CD4-positive, alpha-beta T cell (primary cell): ENCODE measurements at regions of chr11 and their contacts with region 1.

Region 1: DNA sequence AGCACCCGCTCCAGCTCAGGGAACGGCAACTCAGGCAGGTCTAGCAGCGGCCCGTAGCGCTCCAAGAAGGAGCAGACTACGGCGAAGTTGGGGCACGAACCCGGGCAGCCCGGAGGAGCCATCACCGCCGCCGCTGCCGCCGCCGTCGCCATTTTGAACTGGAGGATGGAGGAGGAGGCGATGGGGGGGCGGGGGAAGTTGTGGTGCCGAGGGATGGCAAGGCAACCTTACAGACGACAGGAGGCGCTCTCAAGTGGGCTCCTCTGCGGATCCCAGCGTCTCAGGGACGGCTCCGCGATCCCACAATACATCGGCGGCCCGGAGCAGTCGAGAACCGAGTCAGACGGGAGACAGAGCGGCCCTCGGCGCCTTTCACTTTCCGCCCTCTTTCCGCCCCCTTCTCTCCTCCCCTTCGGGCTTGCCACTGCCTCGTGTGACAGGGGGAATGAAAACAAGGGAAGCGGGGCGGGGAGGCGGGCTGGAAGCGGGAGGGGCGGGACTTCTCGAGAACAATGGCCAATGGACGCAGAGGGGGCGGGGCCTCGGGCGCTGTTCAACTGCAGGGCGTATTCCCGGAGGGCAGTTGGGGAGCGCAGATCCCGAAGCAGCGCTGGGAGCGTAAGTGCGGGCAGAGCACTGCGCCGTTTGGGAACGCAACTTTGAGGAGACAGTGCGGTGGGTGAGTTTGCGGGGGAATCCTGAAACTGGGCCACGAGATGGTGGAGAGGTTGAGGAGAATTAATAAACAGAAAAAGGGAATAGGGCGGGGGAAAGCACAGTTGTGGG is at the starts of genes AAMDC and RSF1:
- DNase-seq: peak; percentile 92 to 99 (median 96)
- ATAC-seq: peak; percentile 80
- H3K4me3 ChIP-seq: peak within 1 kb of the TSS; percentile 84
- H3K4me3 Mint-ChIP-seq: peak within 1 kb of the TSS; percentile 98
- H3K27ac ChIP-seq: peak within 1 kb of the TSS; percentile 74 to 95
- H3K27ac Mint-ChIP-seq: peak within 1 kb of the TSS; percentile 92
- H3K4me1 ChIP-seq: peaks cover 29% of the 10 kb centered on the region
- H3K4me1 Mint-ChIP-seq: peaks cover 46% of the 10 kb centered on the region
- H3K27me3 ChIP-seq: no peaks in the 10 kb centered on the region
- H3K27me3 Mint-ChIP-seq: no peaks in the 10 kb centered on the region
- CTCF ChIP-seq: peak; percentile 69
- total RNA-seq, gene AAMDC: 1.5 to 2.1 TPM
- total RNA-seq, gene RSF1: 87.7 to 91.9 TPM

Region 2: GRCh38 chr11:77637345-77638165 is 183.2 kb before region 1 on chr11 and contains the start of gene CLNS1A:
- CTCF ChIA-PET with region 1: no interaction called
- POLR2A ChIA-PET with region 1: no interaction called
- intact Hi-C with region 1: loop called in 1 of 2 experiments (anchors 2 kb)
- DNase-seq: peak; percentile 61 to 89 (median 74)
- ATAC-seq: peak; percentile 99
- H3K4me3 ChIP-seq: peak within 1 kb of the TSS; percentile 92
- H3K4me3 Mint-ChIP-seq: peak within 1 kb of the TSS; percentile 98
- H3K27ac ChIP-seq: peak within 1 kb of the TSS; percentile 65 to 77
- H3K27ac Mint-ChIP-seq: peak within 1 kb of the TSS; percentile 85
- H3K4me1 ChIP-seq: peaks cover 31% of the 10 kb centered on the region
- H3K4me1 Mint-ChIP-seq: peaks cover 48% of the 10 kb centered on the region
- H3K27me3 ChIP-seq: peaks cover 0 to 2% of the 10 kb centered on the region in 2 experiments
- H3K27me3 Mint-ChIP-seq: no peaks in the 10 kb centered on the region
- CTCF ChIP-seq: no peak
- total RNA-seq, gene CLNS1A: 87.8 to 93.1 TPM

Region 3: GRCh38 chr11:77776455-77776854 is 44.3 kb before region 1 on chr11:
- CTCF ChIA-PET with region 1: no interaction called
- POLR2A ChIA-PET with region 1: no interaction called
- intact Hi-C with region 1: loop called (anchors 1 to 5 kb)
- DNase-seq: peak in 3 of 14 experiments; percentile 45 to 53 (median 49)
- ATAC-seq: no peak
- H3K4me3 ChIP-seq: no peak overlapping the region
- H3K4me3 Mint-ChIP-seq: no peak overlapping the region
- H3K27ac ChIP-seq: no peak overlapping the region
- H3K27ac Mint-ChIP-seq: no peak overlapping the region
- H3K4me1 ChIP-seq: peaks cover 4% of the 10 kb centered on the region
- H3K4me1 Mint-ChIP-seq: peaks cover 79% of the 10 kb centered on the region
- H3K27me3 ChIP-seq: no peaks in the 10 kb centered on the region
- H3K27me3 Mint-ChIP-seq: no peaks in the 10 kb centered on the region
- CTCF ChIP-seq: no peak

Region 4: GRCh38 chr11:77799338-77799737 is 21.4 kb before region 1 on chr11:
- CTCF ChIA-PET with region 1: no interaction called
- POLR2A ChIA-PET with region 1: no interaction called
- intact Hi-C with region 1: loop called in 1 of 2 experiments (anchors 2 kb)
- DNase-seq: no peak
- ATAC-seq: no peak
- H3K4me3 ChIP-seq: no peak overlapping the region
- H3K4me3 Mint-ChIP-seq: no peak overlapping the region
- H3K27ac ChIP-seq: no peak overlapping the region
- H3K27ac Mint-ChIP-seq: peak overlapping the region; percentile 6
- H3K4me1 ChIP-seq: peaks cover 19% of the 10 kb centered on the region
- H3K4me1 Mint-ChIP-seq: peaks cover 76% of the 10 kb centered on the region
- H3K27me3 ChIP-seq: no peaks in the 10 kb centered on the region
- H3K27me3 Mint-ChIP-seq: no peaks in the 10 kb centered on the region
- CTCF ChIP-seq: no peak

Region 5: DNA sequence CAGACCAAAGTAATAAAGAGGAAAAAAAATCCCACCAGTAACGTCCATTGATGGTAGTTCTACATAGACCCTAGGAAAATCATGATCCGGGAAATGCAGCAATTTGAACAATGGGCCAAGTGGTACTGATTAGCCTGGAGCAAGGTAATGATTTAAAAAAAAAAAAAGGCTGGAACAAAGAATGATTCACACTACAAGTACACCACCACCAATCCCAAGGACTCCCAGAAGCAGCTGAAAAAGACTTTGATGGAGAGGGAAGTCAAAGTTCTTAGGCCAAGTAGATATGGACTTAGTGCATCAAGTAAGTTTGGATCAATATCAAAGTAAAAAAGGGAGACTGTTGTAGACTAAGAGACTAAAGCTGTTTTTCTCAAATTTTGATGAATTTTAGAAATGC is 190.5 kb after region 1 on chr11:
- CTCF ChIA-PET with region 1: no interaction called
- POLR2A ChIA-PET with region 1: no interaction called
- intact Hi-C with region 1: no loop called
- DNase-seq: no peak
- ATAC-seq: no peak
- H3K4me3 ChIP-seq: no peak overlapping the region
- H3K4me3 Mint-ChIP-seq: no peak overlapping the region
- H3K27ac ChIP-seq: no peak overlapping the region
- H3K27ac Mint-ChIP-seq: no peak overlapping the region
- H3K4me1 ChIP-seq: no peaks in the 10 kb centered on the region
- H3K4me1 Mint-ChIP-seq: no peaks in the 10 kb centered on the region
- H3K27me3 ChIP-seq: no peaks in the 10 kb centered on the region
- H3K27me3 Mint-ChIP-seq: no peaks in the 10 kb centered on the region
- CTCF ChIP-seq: no peak

Region 6: GRCh38 chr11:78416305-78417178 is 595.8 kb after region 1 on chr11:
- CTCF ChIA-PET with region 1: no interaction called
- POLR2A ChIA-PET with region 1: interaction called, 3 read pairs
- intact Hi-C with region 1: loop called in 1 of 2 experiments (anchors 5 kb)
- DNase-seq: peak; percentile 57 to 86 (median 74)
- ATAC-seq: peak; percentile 70
- H3K4me3 ChIP-seq: peak overlapping the region; percentile 59
- H3K4me3 Mint-ChIP-seq: peak overlapping the region; percentile 88
- H3K27ac ChIP-seq: peak overlapping the region in 1 of 2 donors; percentile 4
- H3K27ac Mint-ChIP-seq: peak overlapping the region; percentile 84
- H3K4me1 ChIP-seq: peaks cover 33% of the 10 kb centered on the region
- H3K4me1 Mint-ChIP-seq: peaks cover 22% of the 10 kb centered on the region
- H3K27me3 ChIP-seq: peaks cover 0 to 5% of the 10 kb centered on the region in 2 experiments
- H3K27me3 Mint-ChIP-seq: peaks cover 28% of the 10 kb centered on the region
- CTCF ChIP-seq: peak; percentile 73